ENCODE measurements at regions of chr15 and their contacts with region 1.

Region 1: GRCh38 chr15:77974098-77974414 is 103.5 kb downstream of the TBC1D2B start:
- DNase-seq: peak in 4 of 5 donors; percentile 59 to 85 (median 71)
- ATAC-seq: peak; percentile 43 to 75 (median 72)
- H3K4me3 ChIP-seq: no peak overlapping the region
- H3K27ac ChIP-seq: peak overlapping the region in 8 of 12 donors; percentile 50 to 81 (median 60)
- H3K4me1 ChIP-seq: peaks cover 0 to 31% (median 20%) of the 10 kb centered on the region in 12 donors
- H3K27me3 ChIP-seq: no peaks in the 10 kb centered on the region
- CTCF ChIP-seq: no peak
- POLR2A ChIP-seq: no peak

Region 2: GRCh38 chr15:77992356-77993222 is 18.5 kb after region 1 on chr15:
- intact Hi-C with region 1: loop called in 1 of 10 experiments (anchors 2 kb)
- DNase-seq: peak in 1 of 5 donors; percentile 61
- ATAC-seq: peak in 2 of 4 donors; percentile 9 to 19
- H3K4me3 ChIP-seq: no peak overlapping the region
- H3K27ac ChIP-seq: peak overlapping the region; percentile 16 to 95 (median 84)
- H3K4me1 ChIP-seq: peaks cover 6 to 73% (median 54%) of the 10 kb centered on the region in 12 donors
- H3K27me3 ChIP-seq: no peaks in the 10 kb centered on the region
- CTCF ChIP-seq: no peak
- POLR2A ChIP-seq: no peak

Region 3: GRCh38 chr15:78778422-78778821 is 804.4 kb after region 1 on chr15:
- intact Hi-C with region 1: loop called in 1 of 10 experiments (anchors 10 kb)
- DNase-seq: no peak
- ATAC-seq: no peak
- H3K4me3 ChIP-seq: no peak overlapping the region
- H3K27ac ChIP-seq: peak overlapping the region in 9 of 12 donors; percentile 28 to 71 (median 54)
- H3K4me1 ChIP-seq: peaks cover 0 to 35% (median 20%) of the 10 kb centered on the region in 12 donors
- H3K27me3 ChIP-seq: no peaks in the 10 kb centered on the region
- CTCF ChIP-seq: no peak
- POLR2A ChIP-seq: no peak